SK-N-SH (cell line): ENCODE measurements at regions of chr6 and their contacts with region 1.

Region 1: DNA sequence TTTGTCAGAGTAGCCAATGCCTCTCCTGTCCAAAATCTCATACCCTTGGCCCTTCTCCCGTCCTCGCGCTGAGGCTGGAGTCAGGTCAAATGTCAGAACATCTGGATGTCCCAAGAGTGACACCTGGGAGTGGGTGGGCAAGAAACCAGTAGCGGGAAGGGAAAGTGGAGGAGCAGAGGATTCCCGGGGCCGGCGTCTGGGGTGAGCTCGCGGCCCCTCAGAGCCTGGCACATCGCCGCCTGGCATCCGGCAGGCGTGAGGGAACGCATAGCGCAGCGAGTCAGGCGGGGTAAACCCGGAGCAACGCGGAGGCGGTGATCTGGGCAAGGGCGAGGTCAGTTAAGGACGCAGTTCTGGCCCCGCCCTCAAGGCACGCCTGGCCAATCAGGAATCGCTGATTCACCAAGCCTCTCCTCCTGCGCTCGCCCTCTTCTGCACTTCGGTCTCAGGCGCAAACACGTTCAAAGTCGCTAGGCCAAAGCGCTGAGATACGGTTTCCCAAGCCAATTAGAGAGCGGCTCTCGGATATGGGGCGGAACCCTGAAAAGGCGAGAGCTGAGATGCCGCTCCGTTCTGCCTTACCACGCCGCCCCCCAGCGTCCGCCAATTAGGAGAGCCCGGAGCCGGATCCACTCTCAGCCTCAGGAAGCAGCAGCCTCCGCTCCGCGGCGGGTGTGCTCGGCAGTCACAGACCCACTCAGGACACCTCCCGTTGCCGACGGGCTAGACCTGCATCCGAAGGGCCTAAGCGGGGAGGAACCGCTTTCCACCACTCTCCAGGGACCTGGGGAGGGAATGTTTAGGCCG is 22.5 kb downstream of the VPS52 start:
- DNase-seq: peak; percentile 88
- H3K4me3 ChIP-seq: peak overlapping the region; percentile 62 to 76
- H3K27ac ChIP-seq: peak overlapping the region; percentile 96
- H3K4me1 ChIP-seq: peaks cover 21 to 30% of the 10 kb centered on the region in 2 experiments
- H3K27me3 ChIP-seq: no peaks in the 10 kb centered on the region
- CTCF ChIP-seq: no peak
- EP300 ChIP-seq: no peak
- RAD21 ChIP-seq: no peak

Region 2: DNA sequence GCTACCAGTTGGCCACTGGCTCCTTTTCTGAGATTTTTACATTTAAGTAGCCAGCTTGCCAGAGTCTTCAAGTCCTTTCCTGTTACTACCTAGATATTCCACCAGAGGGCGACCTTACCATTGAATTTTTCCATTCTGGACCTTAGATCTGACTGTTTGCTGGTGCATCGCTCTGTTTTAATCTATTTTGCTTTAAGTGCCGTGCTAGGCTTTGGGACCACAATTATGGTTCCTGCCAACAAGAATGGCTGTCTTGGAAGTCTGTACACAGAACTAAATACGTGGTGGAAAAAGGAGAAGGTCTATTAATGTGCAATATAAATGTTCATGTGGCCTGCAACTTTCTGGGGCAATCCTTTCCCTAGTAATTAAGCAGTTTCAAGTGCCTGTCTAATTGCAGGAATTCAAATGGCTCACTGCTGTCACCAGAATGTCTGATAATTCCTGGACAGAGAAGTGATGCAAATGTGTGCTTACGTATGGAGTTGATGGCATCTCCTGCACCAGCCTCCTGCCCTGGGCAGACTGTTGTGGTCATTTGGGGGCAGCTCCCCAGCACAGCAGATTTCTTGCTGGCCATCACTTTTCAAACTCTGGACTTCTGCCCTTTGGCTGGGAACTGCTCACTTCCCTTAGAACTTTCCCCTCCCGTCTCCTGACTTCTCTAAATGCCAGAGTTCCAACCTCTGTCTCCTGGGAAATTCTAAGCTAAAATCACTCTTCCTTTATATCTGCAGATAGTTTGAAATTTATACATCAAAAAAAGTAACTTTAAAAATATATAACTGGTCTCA is 234.1 kb before region 1 on chr6:
- CTCF ChIA-PET with region 1: interaction called, 52 read pairs
- POLR2A ChIA-PET with region 1: no interaction called
- DNase-seq: peak; percentile 71
- H3K4me3 ChIP-seq: no peak overlapping the region; a peak in 1 of 4 replicates
- H3K27ac ChIP-seq: no peak overlapping the region
- H3K4me1 ChIP-seq: no peaks in the 10 kb centered on the region; a peak in 1 of 4 replicates
- H3K27me3 ChIP-seq: peaks cover 72% of the 10 kb centered on the region
- CTCF ChIP-seq: peak; percentile 75
- EP300 ChIP-seq: no peak
- RAD21 ChIP-seq: peak; percentile 78

Region 3: DNA sequence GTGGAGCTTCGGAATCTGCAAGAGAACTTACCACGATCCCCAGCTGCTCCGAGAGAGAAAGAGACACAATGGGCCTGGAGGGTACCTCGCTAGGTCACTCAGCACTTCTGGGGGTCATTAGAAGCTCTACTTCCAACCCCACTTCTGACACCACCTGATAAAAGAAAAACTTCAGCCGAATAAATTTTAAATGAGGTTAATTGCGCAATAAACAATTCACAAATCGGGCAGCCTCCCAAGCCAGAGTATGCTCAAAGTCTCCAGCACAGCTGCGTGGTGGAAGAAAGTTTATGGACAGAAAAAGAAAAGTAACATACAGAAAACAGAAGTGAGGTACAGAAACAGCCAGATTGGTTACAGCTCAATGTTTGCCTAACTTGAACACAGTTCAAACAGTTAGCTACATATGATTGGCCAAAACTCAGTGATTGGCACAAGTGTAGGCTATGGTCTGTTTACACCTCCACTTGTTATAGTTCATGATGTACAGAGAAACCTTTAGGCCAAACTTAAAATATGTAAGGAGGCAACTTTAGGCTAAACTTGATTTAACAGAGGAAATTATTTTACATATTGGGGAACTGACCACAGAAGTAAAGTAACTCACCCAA is 109.4 kb before region 1 on chr6:
- CTCF ChIA-PET with region 1: interaction called, 13 read pairs
- POLR2A ChIA-PET with region 1: no interaction called
- DNase-seq: no peak
- H3K4me3 ChIP-seq: no peak overlapping the region
- H3K27ac ChIP-seq: no peak overlapping the region
- H3K4me1 ChIP-seq: no peaks in the 10 kb centered on the region
- H3K27me3 ChIP-seq: peaks cover 75% of the 10 kb centered on the region
- CTCF ChIP-seq: no peak
- EP300 ChIP-seq: no peak
- RAD21 ChIP-seq: no peak

Region 4: GRCh38 chr6:33161354-33162331 is 87.5 kb before region 1 on chr6:
- CTCF ChIA-PET with region 1: interaction called, 96 read pairs
- POLR2A ChIA-PET with region 1: no interaction called
- DNase-seq: peak; percentile 93
- H3K4me3 ChIP-seq: peak overlapping the region; percentile 44 to 57
- H3K27ac ChIP-seq: no peak overlapping the region
- H3K4me1 ChIP-seq: peaks cover 0 to 7% of the 10 kb centered on the region in 2 experiments; a peak in 1 of 4 replicates
- H3K27me3 ChIP-seq: no peaks in the 10 kb centered on the region; the same call in 1 of the 2 replicates
- CTCF ChIP-seq: peak; percentile 85
- EP300 ChIP-seq: no peak
- RAD21 ChIP-seq: peak; percentile 68

Region 5: DNA sequence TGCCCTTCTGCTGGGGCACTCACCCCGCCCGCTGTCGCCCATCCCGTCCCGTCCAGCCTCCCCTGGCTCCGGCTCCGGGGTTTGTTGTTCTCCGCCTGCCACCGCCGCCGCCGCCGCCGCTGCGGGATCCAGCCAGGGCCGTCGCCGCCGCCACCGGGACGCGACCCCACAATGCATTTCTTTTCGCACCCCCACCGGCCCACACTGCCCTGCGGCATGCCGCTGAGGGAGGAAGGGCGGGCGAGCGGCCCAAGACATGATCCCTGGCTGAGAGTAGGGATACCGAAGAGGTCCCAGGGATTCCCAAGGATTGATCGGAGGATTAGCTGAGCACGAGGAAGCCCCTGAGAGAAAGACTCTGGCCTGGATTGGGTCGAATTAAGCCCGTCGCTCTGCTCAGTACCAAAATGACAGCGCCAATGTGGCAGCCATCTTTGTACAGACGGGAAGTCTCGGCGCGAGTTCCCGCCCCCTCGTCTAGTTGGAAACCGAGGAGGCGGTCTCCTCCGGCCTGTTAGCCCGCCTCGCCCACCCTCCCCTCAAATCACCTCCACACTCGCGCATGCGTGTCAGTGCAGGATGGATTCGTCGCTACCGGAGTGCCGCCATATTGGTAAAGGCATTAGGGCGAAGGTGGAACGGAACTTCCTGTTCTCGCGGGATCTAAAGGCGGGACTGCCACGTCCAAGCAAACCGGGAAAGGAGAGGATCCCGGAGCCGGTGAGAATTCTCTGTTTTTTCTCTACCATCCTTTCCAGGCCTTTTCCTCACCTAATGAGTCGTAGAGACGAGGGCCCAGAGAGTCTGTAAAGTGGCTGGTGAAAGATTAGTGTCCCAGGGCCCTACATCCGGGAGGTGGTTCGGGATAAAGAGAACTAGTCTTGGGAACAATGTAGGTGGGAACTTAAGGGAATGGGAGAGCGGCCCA is 48.6 kb before region 1 on chr6 and contains the starts of genes RXRB and SLC39A7:
- CTCF ChIA-PET with region 1: interaction called, 24 read pairs
- POLR2A ChIA-PET with region 1: interaction called, 5 read pairs
- DNase-seq: peak; percentile 96
- H3K4me3 ChIP-seq: peak within 1 kb of the TSS; percentile 82 to 97
- H3K27ac ChIP-seq: peak within 1 kb of the TSS; percentile 97 to 99
- H3K4me1 ChIP-seq: peaks cover 17 to 41% of the 10 kb centered on the region in 2 experiments; a peak in 3 of 4 replicates
- H3K27me3 ChIP-seq: no peaks in the 10 kb centered on the region
- CTCF ChIP-seq: no peak
- EP300 ChIP-seq: no peak
- RAD21 ChIP-seq: no peak
- polyA plus RNA-seq, gene RXRB: 45.8 and 61.0 TPM in 2 replicates
- polyA plus RNA-seq, gene SLC39A7: 129 and 138 TPM in 2 replicates

Region 6: DNA sequence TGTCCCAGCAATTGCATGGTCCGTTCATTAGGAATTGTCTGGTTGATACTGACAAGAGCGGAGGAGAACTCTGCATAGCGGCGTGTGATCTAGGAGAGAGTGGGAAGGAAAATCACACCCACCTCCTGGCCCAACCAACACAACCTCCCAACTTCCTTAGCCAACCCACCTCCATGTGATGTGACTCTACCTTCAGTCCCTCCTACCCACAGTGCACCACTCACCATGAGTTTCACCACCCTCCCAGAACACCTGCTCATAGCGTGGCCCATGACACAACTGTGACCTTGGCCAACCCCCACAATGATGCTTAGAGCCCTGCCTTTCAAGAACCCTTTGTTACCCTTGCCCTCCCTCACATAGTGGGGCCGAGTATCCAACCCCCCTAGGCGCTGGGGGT is 14.9 kb after region 1 on chr6:
- CTCF ChIA-PET with region 1: interaction called, 25 read pairs
- POLR2A ChIA-PET with region 1: no interaction called
- DNase-seq: no peak
- H3K4me3 ChIP-seq: no peak overlapping the region
- H3K27ac ChIP-seq: no peak overlapping the region
- H3K4me1 ChIP-seq: no peaks in the 10 kb centered on the region; a peak in 1 of 4 replicates
- H3K27me3 ChIP-seq: no peaks in the 10 kb centered on the region
- CTCF ChIP-seq: no peak
- EP300 ChIP-seq: no peak
- RAD21 ChIP-seq: no peak